ENCODE measurements at regions of chr7 and their contacts with region 1.

Region 1: GRCh38 chr7:106402898-106403297 is 118.1 kb upstream of the NAMPT start:
- DNase-seq: no peak
- CTCF ChIP-seq: no peak

Region 2: DNA sequence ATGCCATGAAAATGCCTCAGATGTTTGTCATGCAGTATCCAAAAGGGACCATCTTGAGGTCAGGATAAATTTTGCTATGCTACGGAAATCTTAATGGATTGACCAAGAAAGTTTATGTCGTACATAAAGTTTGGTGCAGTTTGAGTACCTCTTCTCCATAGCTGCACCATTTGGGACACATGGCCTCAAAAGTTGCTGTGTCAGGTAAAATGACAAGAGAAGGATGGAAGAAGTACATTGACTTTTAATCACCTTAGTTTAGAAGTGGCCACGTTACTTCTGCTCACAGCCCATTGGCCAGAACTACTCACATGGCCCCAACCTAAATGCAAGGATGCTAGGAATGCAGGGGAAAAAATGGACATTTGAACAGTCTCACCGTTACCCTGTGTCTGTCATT is 10.8 kb before region 1 on chr7:
- CTCF ChIA-PET with region 1: interaction called, 12 read pairs
- POLR2A ChIA-PET with region 1: no interaction called
- DNase-seq: no peak
- CTCF ChIP-seq: no peak